ENCODE measurements at regions of chr22 and their contacts with region 1.

Region 1: DNA sequence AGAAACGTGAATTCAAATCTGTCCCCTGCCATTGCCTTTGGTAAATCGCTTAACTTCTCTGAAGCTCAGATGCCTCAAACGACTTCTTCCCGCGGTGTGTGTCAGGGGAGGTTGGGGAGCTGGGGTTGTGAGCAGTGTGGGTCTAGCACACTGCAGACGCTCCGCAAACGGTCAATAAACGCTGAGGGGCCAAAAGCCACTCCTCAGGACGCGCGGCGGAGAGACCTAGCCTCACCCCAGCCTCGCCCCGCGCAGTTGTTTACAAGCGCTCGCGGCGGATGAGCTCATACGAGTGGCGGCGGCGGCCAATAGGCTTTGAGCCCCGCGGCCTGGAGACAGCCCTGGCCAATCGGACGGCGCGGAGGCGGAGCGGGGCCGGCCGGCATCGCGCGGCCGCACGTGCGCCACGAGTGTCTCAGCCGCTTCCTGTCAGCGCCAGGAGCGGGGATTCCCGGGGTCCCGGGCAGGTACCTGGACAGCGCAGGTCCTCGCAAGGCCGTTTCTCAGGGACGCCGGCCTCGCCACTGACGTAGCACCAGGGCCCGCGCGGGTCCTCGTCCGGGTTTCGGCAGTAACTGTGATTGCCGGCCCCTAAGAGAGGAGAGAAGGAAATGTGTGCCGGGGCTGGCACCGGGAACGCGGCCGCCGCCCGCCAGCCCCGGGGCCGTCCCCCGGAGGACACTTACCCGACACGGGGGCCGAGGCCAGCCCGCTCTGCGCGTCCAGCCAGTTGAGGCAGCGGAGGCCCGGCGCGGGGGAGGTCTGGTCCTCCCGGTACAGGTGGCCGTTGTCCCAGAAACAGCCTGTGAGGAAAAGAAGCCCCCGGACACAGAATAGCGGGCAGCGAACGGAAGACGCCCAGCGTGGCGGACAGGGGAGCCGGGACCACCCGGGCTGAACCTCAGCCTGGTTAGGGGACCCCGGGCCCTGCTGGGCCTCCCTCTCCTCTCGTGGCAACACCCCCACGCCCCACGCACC is 1.5 kb downstream of the PIK3IP1 start:
- DNase-seq: peak; percentile 95 to 96
- ATAC-seq: peak; percentile 70 to 81
- H3K4me3 ChIP-seq: peak overlapping the region; percentile 56 to 89 (median 72)
- H3K27ac ChIP-seq: peak overlapping the region; percentile 91 to 100 (median 97)
- H3K4me1 ChIP-seq: peaks cover 42 to 48% of the 10 kb centered on the region in 2 donors
- H3K27me3 ChIP-seq: no peaks in the 10 kb centered on the region
- CTCF ChIP-seq: peak in 1 of 5 experiments; percentile 8
- POLR2A ChIP-seq: peak; percentile 98 to 100

Region 2: GRCh38 chr22:29937940-29938693 is 1352.7 kb before region 1 on chr22:
- in situ Hi-C with region 1: no loop called
- intact Hi-C with region 1: no loop called
- DNase-seq: no peak
- ATAC-seq: no peak
- H3K4me3 ChIP-seq: no peak overlapping the region
- H3K27ac ChIP-seq: no peak overlapping the region
- H3K4me1 ChIP-seq: peaks cover 44 to 49% of the 10 kb centered on the region in 2 donors
- H3K27me3 ChIP-seq: no peaks in the 10 kb centered on the region
- CTCF ChIP-seq: no peak
- POLR2A ChIP-seq: no peak

Region 3: DNA sequence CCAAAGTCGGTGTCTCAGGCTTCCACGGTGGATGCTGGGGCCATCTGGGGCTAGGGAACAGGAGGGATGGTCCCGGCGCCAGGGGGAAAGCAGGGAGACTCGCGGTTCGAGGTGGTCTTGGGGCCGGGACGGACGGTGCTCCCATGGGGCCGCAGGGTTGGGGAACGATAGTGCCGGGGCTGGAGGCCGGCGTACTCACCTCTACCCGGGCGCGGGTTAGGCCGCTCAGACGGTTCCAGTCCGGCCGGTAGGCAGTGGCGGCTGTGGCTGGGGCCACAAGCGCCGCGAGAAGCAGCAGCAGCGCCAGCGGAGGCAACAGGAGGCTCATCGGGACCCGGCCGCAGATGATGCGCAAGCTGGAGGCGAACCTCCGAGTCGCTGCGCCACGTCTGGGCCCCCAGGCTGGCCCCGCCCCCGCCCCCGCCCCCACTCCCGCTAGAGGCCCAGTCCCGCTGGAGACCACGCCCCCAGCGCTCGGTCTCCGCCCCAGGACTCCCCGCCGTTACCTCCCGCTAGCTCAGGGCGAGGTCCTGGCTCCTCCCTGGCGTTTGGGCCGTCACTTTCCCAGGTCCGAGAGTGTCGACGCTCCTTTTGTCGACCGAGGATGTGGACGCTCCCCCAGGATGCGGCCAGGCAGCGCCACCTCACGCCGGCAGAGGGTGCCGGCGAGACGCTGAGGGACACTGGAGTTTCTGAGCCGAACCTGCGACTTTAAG is 183.4 kb before region 1 on chr22 and contains the start of gene SELENOM:
- in situ Hi-C with region 1: no loop called
- intact Hi-C with region 1: loop called (anchors 5 kb)
- DNase-seq: peak; percentile 96 to 97
- ATAC-seq: peak; percentile 92 to 94
- H3K4me3 ChIP-seq: peak within 1 kb of the TSS; percentile 68 to 81 (median 80)
- H3K27ac ChIP-seq: peak within 1 kb of the TSS; percentile 93 to 98 (median 96)
- H3K4me1 ChIP-seq: peaks cover 22 to 30% of the 10 kb centered on the region in 2 donors
- H3K27me3 ChIP-seq: no peaks in the 10 kb centered on the region
- CTCF ChIP-seq: peak; percentile 89 to 97 (median 94)
- POLR2A ChIP-seq: peak; percentile 85 to 87
- total RNA-seq, gene SELENOM: 144 to 184 (median 157) TPM

Region 4: DNA sequence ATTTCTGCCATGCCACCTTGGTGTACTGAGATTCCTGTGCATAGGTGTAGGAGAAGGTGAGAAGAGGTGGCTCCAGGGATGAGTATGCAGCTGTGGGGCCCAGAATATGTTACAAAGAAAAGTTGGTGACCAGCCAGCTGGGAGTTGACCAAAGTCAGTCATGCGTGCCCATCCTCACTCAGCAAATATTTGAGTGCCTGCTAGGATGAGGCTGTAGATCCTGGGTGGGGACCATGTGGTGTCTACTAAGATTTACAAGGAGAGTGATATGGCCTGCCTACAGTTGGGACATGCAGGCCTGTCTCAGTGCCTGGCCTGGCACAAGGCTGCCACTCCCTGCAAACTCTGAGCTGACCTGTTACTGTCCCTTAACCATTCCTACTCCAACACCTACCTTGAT is 111.4 kb before region 1 on chr22:
- in situ Hi-C with region 1: no loop called
- intact Hi-C with region 1: no loop called
- DNase-seq: peak; percentile 46 to 73
- ATAC-seq: peak; percentile 76 to 84
- H3K4me3 ChIP-seq: no peak overlapping the region
- H3K27ac ChIP-seq: peak overlapping the region; percentile 62 to 79 (median 66)
- H3K4me1 ChIP-seq: peaks cover 32 to 40% of the 10 kb centered on the region in 2 donors
- H3K27me3 ChIP-seq: no peaks in the 10 kb centered on the region
- CTCF ChIP-seq: no peak
- POLR2A ChIP-seq: no peak

Region 5: GRCh38 chr22:31211862-31212730 is 78.7 kb before region 1 on chr22 and contains the start of gene LIMK2:
- in situ Hi-C with region 1: no loop called
- intact Hi-C with region 1: loop called (anchors 5 kb)
- DNase-seq: peak; percentile 87 to 92
- ATAC-seq: peak; percentile 81 to 87
- H3K4me3 ChIP-seq: peak within 1 kb of the TSS; percentile 72 to 91 (median 85)
- H3K27ac ChIP-seq: peak within 1 kb of the TSS; percentile 85 to 88 (median 87)
- H3K4me1 ChIP-seq: peaks cover 20 to 24% of the 10 kb centered on the region in 2 donors
- H3K27me3 ChIP-seq: no peaks in the 10 kb centered on the region
- CTCF ChIP-seq: peak; percentile 69 to 92 (median 75)
- POLR2A ChIP-seq: peak; percentile 80 to 84
- total RNA-seq, gene LIMK2: 4.0 to 12.6 (median 7.1) TPM

Region 6: DNA sequence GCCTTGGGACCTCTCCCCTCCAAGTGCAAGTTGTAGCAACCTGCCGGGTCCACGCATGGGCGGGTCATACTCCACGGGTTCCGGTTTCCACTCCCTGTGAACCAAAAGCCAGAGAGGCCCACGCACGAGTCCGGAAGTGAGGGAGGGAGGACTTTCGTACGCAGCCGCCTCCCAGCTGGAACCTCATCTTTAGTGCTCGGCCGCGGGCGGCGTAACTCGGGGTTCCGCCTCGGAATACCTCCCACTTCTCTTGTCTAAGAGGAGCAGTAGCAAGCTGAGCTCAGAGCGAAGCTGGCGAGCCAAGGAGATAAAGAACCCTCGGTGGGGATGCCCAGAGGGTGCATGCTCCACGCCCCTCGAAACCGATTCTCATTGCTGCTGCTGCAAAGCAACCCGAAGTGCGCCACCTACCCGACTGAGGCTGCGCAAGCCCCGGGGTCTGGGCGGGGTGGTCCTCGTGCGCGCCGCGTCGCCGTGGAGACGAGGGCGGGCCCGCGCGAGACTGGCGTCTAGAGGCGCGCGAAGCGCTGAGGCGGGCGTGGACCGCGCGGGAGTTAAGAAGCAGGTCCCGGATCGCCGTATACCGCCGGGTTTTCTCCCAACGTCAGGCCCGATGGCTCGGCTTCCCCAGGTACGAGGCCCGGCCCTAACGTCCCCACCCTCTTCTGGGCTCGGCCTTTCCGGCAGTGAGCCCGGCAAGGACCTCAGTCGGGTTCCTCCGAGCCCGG is 205.4 kb after region 1 on chr22 and contains the start of gene SFI1:
- in situ Hi-C with region 1: no loop called
- intact Hi-C with region 1: loop called (anchors 5 kb)
- DNase-seq: peak; percentile 60 to 77
- ATAC-seq: peak; percentile 73 to 84
- H3K4me3 ChIP-seq: peak within 1 kb of the TSS; percentile 70 to 96 (median 82)
- H3K27ac ChIP-seq: peak within 1 kb of the TSS; percentile 65 to 75 (median 67)
- H3K4me1 ChIP-seq: peaks cover 12 to 21% of the 10 kb centered on the region in 2 donors
- H3K27me3 ChIP-seq: no peaks in the 10 kb centered on the region
- CTCF ChIP-seq: peak in 2 of 5 experiments; percentile 16 to 34
- POLR2A ChIP-seq: peak in 1 of 2 donors; percentile 13
- total RNA-seq, gene SFI1: 1.1 to 12.6 (median 2.7) TPM

Measured in gastrocnemius medialis (tissue), 4 donors.